ENCODE measurements at regions of chr15 and their contacts with region 1.

Region 1: GRCh38 chr15:44663409-44664308 is at the start of gene SPG11:
- DNase-seq: peak; percentile 92
- H3K4me3 Mint-ChIP-seq: peak within 1 kb of the TSS; percentile 80
- H3K27ac Mint-ChIP-seq: peak within 1 kb of the TSS; percentile 55
- H3K4me1 Mint-ChIP-seq: peaks cover 9% of the 10 kb centered on the region
- H3K27me3 Mint-ChIP-seq: no peaks in the 10 kb centered on the region
- CTCF ChIP-seq: peak; percentile 57
- total RNA-seq, gene SPG11: 36.2 and 36.6 TPM in 2 replicates

Region 2: DNA sequence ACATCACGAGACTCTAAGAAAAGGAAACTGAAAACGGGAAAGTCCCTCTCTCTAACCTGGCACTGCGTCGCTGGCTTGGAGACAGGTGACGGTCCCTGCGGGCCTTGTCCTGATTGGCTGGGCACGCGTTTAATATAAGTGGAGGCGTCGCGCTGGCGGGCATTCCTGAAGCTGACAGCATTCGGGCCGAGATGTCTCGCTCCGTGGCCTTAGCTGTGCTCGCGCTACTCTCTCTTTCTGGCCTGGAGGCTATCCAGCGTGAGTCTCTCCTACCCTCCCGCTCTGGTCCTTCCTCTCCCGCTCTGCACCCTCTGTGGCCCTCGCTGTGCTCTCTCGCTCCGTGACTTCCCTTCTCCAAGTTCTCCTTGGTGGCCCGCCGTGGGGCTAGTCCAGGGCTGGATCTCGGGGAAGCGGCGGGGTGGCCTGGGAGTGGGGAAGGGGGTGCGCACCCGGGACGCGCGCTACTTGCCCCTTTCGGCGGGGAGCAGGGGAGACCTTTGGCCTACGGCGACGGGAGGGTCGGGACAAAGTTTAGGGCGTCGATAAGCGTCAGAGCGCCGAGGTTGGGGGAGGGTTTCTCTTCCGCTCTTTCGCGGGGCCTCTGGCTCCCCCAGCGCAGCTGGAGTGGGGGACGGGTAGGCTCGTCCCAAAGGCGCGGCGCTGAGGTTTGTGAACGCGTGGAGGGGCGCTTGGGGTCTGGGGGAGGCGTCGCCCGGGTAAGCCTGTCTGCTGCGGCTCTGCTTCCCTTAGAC is 47.9 kb after region 1 on chr15 and contains the start of gene B2M:
- CTCF ChIA-PET with region 1: interaction called, 24 read pairs
- intact Hi-C with region 1: loop called (anchors 1 kb)
- DNase-seq: peak; percentile 87
- H3K4me3 Mint-ChIP-seq: peak within 1 kb of the TSS; percentile 97
- H3K27ac Mint-ChIP-seq: peak within 1 kb of the TSS; percentile 93
- H3K4me1 Mint-ChIP-seq: no peaks in the 10 kb centered on the region
- H3K27me3 Mint-ChIP-seq: no peaks in the 10 kb centered on the region
- CTCF ChIP-seq: no peak
- total RNA-seq, gene B2M: 1,002 and 1,731 TPM in 2 replicates

Region 3: DNA sequence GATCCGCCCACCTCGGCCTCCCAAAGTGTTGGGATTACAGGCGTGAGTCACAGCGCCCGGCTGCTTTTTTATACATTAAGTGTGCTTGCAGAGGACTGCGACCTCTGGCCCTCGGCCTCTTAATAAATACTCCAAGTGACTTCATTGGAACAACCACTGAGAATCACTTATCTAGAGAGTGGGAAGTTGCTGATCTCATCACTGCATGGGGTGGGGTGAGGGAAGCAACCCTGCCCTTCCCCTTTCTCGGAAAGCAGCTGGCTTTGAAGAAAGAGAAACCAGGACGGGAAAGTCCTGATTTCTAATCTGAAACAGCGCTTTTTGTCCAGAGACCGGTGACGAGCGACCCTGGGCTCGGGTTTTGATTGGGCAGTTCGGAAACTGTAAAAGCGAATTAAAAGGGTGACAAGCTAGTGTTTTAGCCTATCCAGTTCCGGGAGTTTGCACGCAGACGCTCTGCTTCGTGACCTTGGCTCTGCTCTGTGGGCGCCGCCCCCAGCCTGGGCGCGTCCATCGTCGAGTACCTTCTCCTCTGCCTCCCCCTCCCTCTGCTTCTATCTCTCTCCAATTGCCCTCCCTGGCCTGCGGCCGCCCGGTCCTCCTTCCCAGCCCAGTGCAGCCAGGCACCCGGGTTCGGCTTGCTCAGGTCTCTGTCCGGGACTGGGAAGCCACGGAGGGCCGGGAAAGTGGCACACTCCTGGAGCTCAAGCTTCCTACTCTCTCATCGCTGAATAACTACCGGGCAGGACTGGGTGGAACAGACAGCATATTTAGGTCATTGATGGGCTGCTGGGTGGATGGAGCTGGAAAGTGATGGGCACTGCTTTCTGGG is 65.1 kb after region 1 on chr15:
- CTCF ChIA-PET with region 1: interaction called, 15 read pairs
- intact Hi-C with region 1: no loop called
- DNase-seq: peak; percentile 83
- H3K4me3 Mint-ChIP-seq: peak overlapping the region; percentile 99
- H3K27ac Mint-ChIP-seq: peak overlapping the region; percentile 82
- H3K4me1 Mint-ChIP-seq: no peaks in the 10 kb centered on the region
- H3K27me3 Mint-ChIP-seq: no peaks in the 10 kb centered on the region
- CTCF ChIP-seq: no peak

Region 4: GRCh38 chr15:44738340-44738984 is 74.8 kb after region 1 on chr15:
- CTCF ChIA-PET with region 1: interaction called, 13 read pairs
- intact Hi-C with region 1: loop called (anchors 2 kb)
- DNase-seq: no peak
- H3K4me3 Mint-ChIP-seq: no peak overlapping the region
- H3K27ac Mint-ChIP-seq: no peak overlapping the region
- H3K4me1 Mint-ChIP-seq: no peaks in the 10 kb centered on the region
- H3K27me3 Mint-ChIP-seq: no peaks in the 10 kb centered on the region
- CTCF ChIP-seq: no peak

Region 5: DNA sequence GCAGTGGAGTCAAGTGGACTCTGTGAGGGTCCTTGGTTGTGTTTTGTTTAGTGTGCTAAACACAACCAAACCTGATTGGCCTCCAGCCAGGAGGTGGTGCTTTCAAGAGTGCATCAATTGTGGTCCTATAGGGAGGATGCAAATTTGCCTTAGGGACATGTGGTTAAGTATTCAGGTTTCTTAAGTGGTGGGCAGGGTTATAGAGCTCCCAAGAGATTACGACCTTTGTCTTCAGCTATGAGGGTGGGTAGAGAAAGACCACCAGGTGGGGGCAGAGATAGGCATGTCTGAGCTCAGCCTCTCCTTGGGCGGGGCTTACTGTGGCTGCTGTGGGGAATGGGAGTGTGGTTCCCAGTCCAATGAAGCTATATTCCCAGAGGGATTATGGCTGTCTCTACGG is 1157.7 kb after region 1 on chr15:
- CTCF ChIA-PET with region 1: no interaction called
- intact Hi-C with region 1: no loop called
- DNase-seq: no peak
- H3K4me3 Mint-ChIP-seq: no peak overlapping the region
- H3K27ac Mint-ChIP-seq: no peak overlapping the region
- H3K4me1 Mint-ChIP-seq: no peaks in the 10 kb centered on the region
- H3K27me3 Mint-ChIP-seq: peaks cover 19% of the 10 kb centered on the region
- CTCF ChIP-seq: no peak

Measured in Calu3 (cell line).